ENCODE measurements at regions of chr3 and their contacts with region 1.

Region 1: DNA sequence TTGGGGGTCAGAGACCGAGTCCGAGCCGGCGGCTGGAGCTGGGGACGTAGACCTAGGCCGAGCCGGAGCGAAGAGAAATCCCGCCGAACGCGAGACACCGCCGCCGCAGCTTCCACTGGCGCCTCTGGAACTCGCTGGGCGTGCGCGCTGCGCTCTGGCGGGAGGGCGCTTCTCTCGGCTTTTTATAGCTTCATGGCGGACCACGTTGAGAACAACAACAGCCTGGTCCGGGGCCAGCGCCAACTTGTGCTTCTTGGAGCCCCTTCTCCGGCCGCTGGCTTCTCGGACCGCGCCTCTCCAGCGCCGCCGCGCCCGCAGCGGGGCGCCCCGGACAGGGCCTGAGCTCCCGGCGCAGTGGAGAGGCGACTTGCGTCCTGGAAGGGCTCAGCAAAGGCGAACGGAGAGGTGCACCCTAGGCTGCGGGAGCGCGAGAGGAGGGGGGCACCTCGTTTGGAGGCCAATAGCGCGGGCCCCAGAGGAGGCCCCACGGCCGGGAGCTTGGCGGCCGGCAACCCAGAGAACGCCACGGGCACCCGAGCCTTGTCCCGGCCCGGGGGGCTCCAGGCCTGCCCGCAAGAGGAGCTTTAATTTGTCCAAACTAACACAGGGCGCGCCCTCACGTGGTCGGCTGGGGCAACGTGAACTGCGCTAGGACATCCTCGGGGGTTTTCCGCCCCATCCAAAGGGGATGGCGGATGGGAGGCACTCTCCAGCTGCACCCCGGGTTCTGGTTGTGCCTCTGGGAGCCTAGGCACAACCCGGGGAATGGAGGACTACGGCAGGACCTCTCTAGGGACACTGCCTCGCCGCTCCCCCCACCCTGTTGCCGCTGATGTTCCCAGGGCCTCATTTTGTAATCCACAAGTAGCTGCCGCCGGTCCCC is 37.7 kb downstream of the HMCES start:
- DNase-seq: no peak
- H3K4me3 ChIP-seq: peak overlapping the region; percentile 86
- CTCF ChIP-seq: peak; percentile 70

Region 2: DNA sequence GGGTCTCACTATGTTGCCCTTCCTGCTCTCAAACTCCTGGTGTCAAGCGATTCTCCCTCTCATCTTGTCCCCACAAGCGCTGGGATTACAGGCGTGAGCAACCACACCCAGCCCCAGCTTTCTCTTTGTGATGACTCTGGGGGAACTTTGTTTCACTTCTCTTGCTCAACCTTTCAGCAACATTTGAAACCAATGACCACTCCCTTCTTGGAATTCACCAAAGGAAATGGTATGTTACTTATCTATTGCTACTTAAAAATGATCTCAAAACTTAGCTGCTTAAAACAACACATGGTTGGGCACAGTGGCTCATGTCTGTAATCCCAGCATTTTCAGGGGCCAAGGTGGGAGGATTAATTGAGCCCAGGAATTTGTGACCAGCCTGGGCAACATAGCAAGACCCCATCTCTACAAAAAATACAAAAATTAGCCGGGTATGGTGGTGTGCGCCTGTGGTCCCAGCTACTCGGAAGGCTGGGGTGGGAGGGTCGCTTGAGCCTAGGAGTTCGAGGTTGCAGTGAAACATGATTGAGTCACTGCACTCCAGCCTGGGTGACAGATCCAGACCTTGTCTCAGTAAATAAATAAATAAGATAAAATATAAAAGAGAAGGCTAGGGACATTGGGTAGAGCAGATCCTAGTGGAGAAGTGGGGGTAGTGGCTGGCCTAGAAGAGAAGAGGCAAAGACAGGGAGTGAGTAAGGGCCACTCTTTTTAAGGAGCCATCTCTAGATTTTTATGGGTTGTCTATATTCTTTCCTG is 77.2 kb before region 1 on chr3:
- CTCF ChIA-PET with region 1: no interaction called
- POLR2A ChIA-PET with region 1: no interaction called
- DNase-seq: no peak
- H3K4me3 ChIP-seq: no peak overlapping the region
- CTCF ChIP-seq: no peak

Region 3: GRCh38 chr3:129278439-129278970 is 37.9 kb before region 1 on chr3 and contains the start of gene HMCES:
- CTCF ChIA-PET with region 1: interaction called, 9 read pairs
- POLR2A ChIA-PET with region 1: interaction called, 14 read pairs
- DNase-seq: no peak
- H3K4me3 ChIP-seq: peak within 1 kb of the TSS; percentile 86
- CTCF ChIP-seq: no peak

Region 4: DNA sequence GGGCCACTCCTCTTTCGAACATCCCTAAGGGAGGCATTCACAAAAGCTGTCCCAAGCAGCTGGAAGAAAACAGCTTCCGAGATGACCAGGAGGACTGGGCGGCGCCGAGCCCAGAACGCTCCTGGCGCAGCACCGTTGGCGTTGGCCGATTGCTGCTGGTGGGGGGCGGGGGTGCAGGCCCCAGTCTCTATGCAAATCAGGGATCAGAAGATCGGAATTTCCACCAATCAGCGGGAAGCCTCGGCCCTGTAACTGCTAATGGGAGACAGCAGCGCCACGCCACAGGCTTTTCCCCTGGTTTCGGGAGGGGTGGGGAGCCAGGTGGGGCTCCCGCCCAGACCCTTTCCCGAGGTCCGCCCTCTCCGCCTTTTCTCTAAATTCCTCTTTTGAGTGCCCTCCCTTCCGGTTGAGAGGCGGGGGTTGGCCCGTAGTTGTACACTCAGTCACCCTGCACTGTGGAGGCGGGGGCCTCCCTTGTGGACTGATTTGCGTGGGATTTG is 10.7 kb before region 1 on chr3:
- CTCF ChIA-PET with region 1: interaction called, 13 read pairs
- POLR2A ChIA-PET with region 1: interaction called, 16 read pairs
- DNase-seq: no peak
- H3K4me3 ChIP-seq: no peak overlapping the region
- CTCF ChIP-seq: no peak